Psoas muscle (tissue), 8 donors: ENCODE measurements at regions of chr9 and their contacts with region 1.

Region 1: DNA sequence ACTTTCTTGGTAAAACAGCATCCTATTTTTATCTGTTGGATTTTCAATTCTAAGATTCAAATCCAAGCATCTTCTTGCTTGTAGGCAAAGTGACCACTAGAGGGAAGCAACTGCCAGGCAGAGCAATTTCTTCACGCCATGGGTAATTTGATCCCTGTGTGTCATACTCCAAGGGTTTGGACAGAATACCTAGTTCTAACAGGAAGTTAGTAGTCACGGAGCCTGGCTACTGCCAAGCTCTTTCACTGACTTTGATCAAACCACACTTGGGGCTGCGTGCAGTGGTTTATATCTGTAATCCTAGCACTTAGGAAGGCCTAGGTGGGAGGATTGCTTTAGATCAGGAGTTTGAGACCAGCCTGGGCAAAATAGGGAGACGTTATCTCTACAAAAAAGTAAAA is 473.6 kb upstream of the TNC start:
- DNase-seq: peak; percentile 60 to 71
- ATAC-seq: peak; percentile 79 to 98 (median 98)
- H3K4me3 ChIP-seq: no peak overlapping the region
- H3K27ac ChIP-seq: no peak overlapping the region
- H3K4me1 ChIP-seq: no peaks in the 10 kb centered on the region
- H3K27me3 ChIP-seq: peaks cover 0 to 8% (median 2%) of the 10 kb centered on the region in 3 donors
- CTCF ChIP-seq: peak; percentile 33

Region 2: DNA sequence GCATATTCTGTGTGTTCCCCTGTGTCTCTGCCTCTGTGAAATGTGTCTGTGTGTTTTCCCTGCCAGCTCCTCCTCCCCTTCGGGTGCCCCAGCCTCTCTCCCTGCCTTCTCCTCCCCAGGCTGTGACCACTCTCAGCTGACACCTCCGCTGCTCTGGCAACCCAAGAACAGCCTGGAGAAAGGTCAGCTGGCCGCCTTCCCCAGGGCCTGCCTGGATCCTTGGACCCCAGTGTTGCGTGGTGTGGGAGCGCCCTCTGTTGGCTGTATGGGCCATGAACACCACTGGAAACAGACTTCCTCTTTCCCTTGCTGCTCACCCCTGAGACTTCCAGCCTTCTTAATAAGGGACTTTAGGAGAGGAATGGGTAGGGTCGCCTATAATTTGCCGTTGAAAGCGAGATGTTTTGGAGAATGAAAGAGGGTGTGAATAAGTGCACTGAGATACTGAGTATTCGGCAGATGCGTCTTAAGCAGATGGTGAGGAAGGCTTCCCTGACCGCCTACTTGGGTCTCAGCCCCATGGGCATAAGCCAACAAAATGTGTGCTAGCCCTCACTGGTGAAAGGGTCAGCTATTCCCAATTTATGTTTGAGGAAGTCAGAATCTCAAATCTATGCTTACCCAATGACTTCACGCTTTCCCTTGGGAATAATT is 980.6 kb after region 1 on chr9:
- intact Hi-C with region 1: loop called (anchors 5 kb)
- DNase-seq: peak; percentile 90 to 95
- ATAC-seq: peak; percentile 97 to 100 (median 98)
- H3K4me3 ChIP-seq: no peak overlapping the region
- H3K27ac ChIP-seq: no peak overlapping the region
- H3K4me1 ChIP-seq: no peaks in the 10 kb centered on the region
- H3K27me3 ChIP-seq: no peaks in the 10 kb centered on the region
- CTCF ChIP-seq: peak; percentile 86

Region 3: GRCh38 chr9:116661037-116661954 is 1069.7 kb after region 1 on chr9:
- intact Hi-C with region 1: loop called (anchors 5 kb)
- DNase-seq: no peak
- ATAC-seq: peak; percentile 78 to 95 (median 90)
- H3K4me3 ChIP-seq: no peak overlapping the region
- H3K27ac ChIP-seq: no peak overlapping the region
- H3K4me1 ChIP-seq: peaks cover 10% of the 10 kb centered on the region
- H3K27me3 ChIP-seq: no peaks in the 10 kb centered on the region
- CTCF ChIP-seq: peak; percentile 78

Region 4: DNA sequence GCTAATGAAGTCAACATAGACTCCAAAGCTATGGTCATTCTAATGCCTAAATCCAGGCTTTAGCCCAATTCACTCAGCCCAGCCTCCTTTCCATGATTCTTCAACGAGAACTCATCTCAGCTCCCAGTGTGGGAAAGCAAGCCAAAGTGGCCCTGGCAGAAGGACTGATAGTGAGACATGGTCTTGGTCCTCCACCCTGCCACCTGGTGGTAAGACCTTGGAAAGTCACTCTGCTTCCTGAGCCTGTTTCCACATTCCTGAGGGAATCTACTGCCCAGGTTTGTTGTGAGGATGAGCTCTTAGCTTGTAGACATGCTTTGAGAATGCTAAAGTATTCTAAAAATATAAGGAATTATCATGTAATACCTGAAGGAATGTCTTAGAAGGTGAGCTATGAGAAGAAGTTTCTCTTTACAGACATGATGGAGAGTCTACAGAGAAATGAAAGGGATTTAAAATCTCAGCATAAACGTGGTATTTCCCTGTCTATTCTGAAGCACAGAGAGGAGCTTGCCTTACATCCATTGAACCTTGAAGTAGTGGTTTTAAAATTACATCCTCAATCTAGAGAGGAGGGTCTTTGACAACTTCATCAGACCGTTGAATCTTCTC is 1269.0 kb after region 1 on chr9:
- intact Hi-C with region 1: loop called in 1 of 2 experiments (anchors 5 kb)
- DNase-seq: peak; percentile 47 to 70
- ATAC-seq: peak; percentile 78 to 88 (median 82)
- H3K4me3 ChIP-seq: no peak overlapping the region
- H3K27ac ChIP-seq: no peak overlapping the region
- H3K4me1 ChIP-seq: no peaks in the 10 kb centered on the region
- H3K27me3 ChIP-seq: no peaks in the 10 kb centered on the region
- CTCF ChIP-seq: peak; percentile 84